ENCODE measurements at regions of chr1 and their contacts with region 1.

Region 1: DNA sequence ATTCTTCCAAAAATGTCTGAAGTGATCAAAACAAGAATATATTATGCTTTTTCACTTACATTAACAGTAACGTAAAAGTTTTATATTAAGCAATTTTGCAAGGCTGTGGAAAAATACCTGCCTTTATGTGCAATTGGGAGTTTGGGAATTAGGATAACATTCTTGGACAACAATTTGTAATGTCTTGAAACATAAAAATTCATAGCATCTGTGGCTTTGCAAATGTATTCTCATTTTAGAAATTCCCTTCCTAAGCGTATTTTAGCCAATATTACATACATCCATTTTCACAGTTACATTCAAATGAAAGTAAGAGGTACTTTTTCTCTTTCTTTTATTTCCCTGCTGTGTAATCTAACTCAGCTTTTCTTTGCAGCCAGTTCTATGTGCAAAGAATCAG is 13.4 kb upstream of the CFH start:
- DNase-seq: no peak
- H3K27ac ChIP-seq: no peak overlapping the region
- CTCF ChIP-seq: no peak

Region 2: DNA sequence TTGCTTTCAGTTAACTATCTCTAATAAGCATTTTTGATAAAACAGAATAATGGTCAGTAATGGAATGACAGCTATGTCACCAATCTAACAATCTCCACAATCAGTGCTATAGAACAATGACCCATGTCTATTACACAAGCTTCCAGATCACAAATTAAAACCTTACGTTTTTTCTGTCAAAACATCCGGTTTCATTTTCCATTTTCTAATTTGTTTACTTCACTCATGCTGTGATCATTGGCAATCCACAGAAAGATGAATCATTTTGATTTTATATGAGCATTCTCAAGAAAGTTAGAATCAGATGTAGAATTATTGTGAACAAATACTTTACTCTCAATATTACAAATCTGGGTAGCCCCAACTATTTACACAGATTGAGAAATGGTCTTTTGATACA is 110.5 kb before region 1 on chr1:
- CTCF ChIA-PET with region 1: interaction called, 12 read pairs
- POLR2A ChIA-PET with region 1: no interaction called
- DNase-seq: no peak
- H3K27ac ChIP-seq: no peak overlapping the region
- CTCF ChIP-seq: no peak

Region 3: GRCh38 chr1:196667131-196667530 is 28.7 kb after region 1 on chr1:
- CTCF ChIA-PET with region 1: no interaction called
- POLR2A ChIA-PET with region 1: no interaction called
- DNase-seq: no peak
- H3K27ac ChIP-seq: no peak overlapping the region
- CTCF ChIP-seq: no peak